ENCODE measurements at regions of chr10 and their contacts with region 1.

Region 1: GRCh38 chr10:128047351-128047750 is 78.9 kb downstream of the MKI67 start:
- DNase-seq: peak; percentile 78 to 92 (median 84)
- H3K4me3 ChIP-seq: peak overlapping the region; percentile 63 to 77
- H3K4me3 Mint-ChIP-seq: peak overlapping the region; percentile 86 to 99 (median 92)
- H3K27ac ChIP-seq: peak overlapping the region; percentile 83
- H3K27ac Mint-ChIP-seq: peak overlapping the region; percentile 90 to 99 (median 93)
- H3K4me1 ChIP-seq: peaks cover 48% of the 10 kb centered on the region
- H3K4me1 Mint-ChIP-seq: peaks cover 28 to 72% (median 49%) of the 10 kb centered on the region in 4 donors
- H3K27me3 ChIP-seq: no peaks in the 10 kb centered on the region
- H3K27me3 Mint-ChIP-seq: no peaks in the 10 kb centered on the region

Region 2: DNA sequence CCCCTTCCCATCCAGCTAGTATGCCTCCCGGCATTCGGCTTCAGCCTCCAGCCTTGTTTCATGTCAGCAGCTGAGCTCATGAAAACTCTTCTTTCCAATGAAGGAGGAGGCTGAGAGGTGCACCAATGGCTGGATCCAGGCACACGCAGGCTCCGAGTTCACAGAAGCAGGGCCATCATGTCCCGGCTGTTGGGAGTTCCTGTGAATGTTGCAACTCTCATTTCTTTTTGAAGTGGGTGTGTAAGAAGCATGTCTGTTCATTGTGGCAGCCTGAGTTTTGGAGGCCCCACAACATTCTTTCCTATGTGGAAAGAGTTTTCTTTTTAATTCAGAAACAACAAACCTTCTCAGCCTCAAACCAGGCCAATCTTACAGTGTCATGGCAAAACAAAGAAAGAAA is 50.8 kb before region 1 on chr10:
- CTCF ChIA-PET with region 1: no interaction called
- POLR2A ChIA-PET with region 1: no interaction called
- intact Hi-C with region 1: no loop called
- DNase-seq: no peak
- H3K4me3 ChIP-seq: no peak overlapping the region
- H3K4me3 Mint-ChIP-seq: no peak overlapping the region
- H3K27ac ChIP-seq: no peak overlapping the region
- H3K27ac Mint-ChIP-seq: no peak overlapping the region
- H3K4me1 ChIP-seq: peaks cover 3% of the 10 kb centered on the region
- H3K4me1 Mint-ChIP-seq: peaks cover under 1 to 5% (median 3%) of the 10 kb centered on the region in 4 donors
- H3K27me3 ChIP-seq: no peaks in the 10 kb centered on the region
- H3K27me3 Mint-ChIP-seq: peaks cover 4 to 12% of the 10 kb centered on the region in 2 donors

Region 3: GRCh38 chr10:128011175-128011979 is 36.0 kb before region 1 on chr10:
- CTCF ChIA-PET with region 1: interaction called, 11 read pairs
- POLR2A ChIA-PET with region 1: interaction called, 7 read pairs
- intact Hi-C with region 1: loop called (anchors 2 kb)
- DNase-seq: peak; percentile 77 to 89 (median 83)
- H3K4me3 ChIP-seq: no peak overlapping the region
- H3K4me3 Mint-ChIP-seq: peak overlapping the region in 5 of 8 donors; percentile 14 to 50 (median 20)
- H3K27ac ChIP-seq: no peak overlapping the region
- H3K27ac Mint-ChIP-seq: peak overlapping the region in 5 of 7 donors; percentile 10 to 83 (median 62)
- H3K4me1 ChIP-seq: peaks cover 3% of the 10 kb centered on the region
- H3K4me1 Mint-ChIP-seq: peaks cover 6 to 9% (median 7%) of the 10 kb centered on the region in 4 donors
- H3K27me3 ChIP-seq: no peaks in the 10 kb centered on the region
- H3K27me3 Mint-ChIP-seq: peaks cover 2 to 12% of the 10 kb centered on the region in 2 donors

Region 4: GRCh38 chr10:128058750-128059134 is 11.4 kb after region 1 on chr10:
- CTCF ChIA-PET with region 1: interaction called, 45 read pairs
- POLR2A ChIA-PET with region 1: interaction called, 169 read pairs
- intact Hi-C with region 1: loop called (anchors 1 kb)
- DNase-seq: no peak
- H3K4me3 ChIP-seq: no peak overlapping the region
- H3K4me3 Mint-ChIP-seq: no peak overlapping the region
- H3K27ac ChIP-seq: no peak overlapping the region
- H3K27ac Mint-ChIP-seq: peak overlapping the region in 1 of 7 donors; percentile 27
- H3K4me1 ChIP-seq: peaks cover 19% of the 10 kb centered on the region
- H3K4me1 Mint-ChIP-seq: peaks cover 27 to 63% (median 44%) of the 10 kb centered on the region in 4 donors
- H3K27me3 ChIP-seq: no peaks in the 10 kb centered on the region
- H3K27me3 Mint-ChIP-seq: no peaks in the 10 kb centered on the region

Region 5: GRCh38 chr10:128069351-128070051 is 22.1 kb after region 1 on chr10:
- CTCF ChIA-PET with region 1: interaction called, 93 read pairs
- POLR2A ChIA-PET with region 1: interaction called, 169 read pairs
- intact Hi-C with region 1: loop called (anchors 1 kb)
- DNase-seq: peak; percentile 74 to 80 (median 78)
- H3K4me3 ChIP-seq: no peak overlapping the region
- H3K4me3 Mint-ChIP-seq: peak overlapping the region in 2 of 8 donors; percentile 13 to 61
- H3K27ac ChIP-seq: no peak overlapping the region
- H3K27ac Mint-ChIP-seq: peak overlapping the region in 5 of 7 donors; percentile 55 to 82 (median 74)
- H3K4me1 ChIP-seq: peaks cover 29% of the 10 kb centered on the region
- H3K4me1 Mint-ChIP-seq: peaks cover 39 to 54% (median 47%) of the 10 kb centered on the region in 4 donors
- H3K27me3 ChIP-seq: no peaks in the 10 kb centered on the region
- H3K27me3 Mint-ChIP-seq: no peaks in the 10 kb centered on the region

Region 6: GRCh38 chr10:128161031-128161430 is 113.7 kb after region 1 on chr10:
- CTCF ChIA-PET with region 1: no interaction called
- POLR2A ChIA-PET with region 1: no interaction called
- intact Hi-C with region 1: no loop called
- DNase-seq: no peak
- H3K4me3 ChIP-seq: no peak overlapping the region
- H3K4me3 Mint-ChIP-seq: no peak overlapping the region
- H3K27ac ChIP-seq: no peak overlapping the region
- H3K27ac Mint-ChIP-seq: peak overlapping the region in 1 of 7 donors; percentile 34
- H3K4me1 ChIP-seq: no peaks in the 10 kb centered on the region
- H3K4me1 Mint-ChIP-seq: no peaks in the 10 kb centered on the region
- H3K27me3 ChIP-seq: peaks cover 3% of the 10 kb centered on the region
- H3K27me3 Mint-ChIP-seq: peaks cover 0 to 1% of the 10 kb centered on the region in 2 donors

Region 7: GRCh38 chr10:128178319-128178958 is 131.1 kb after region 1 on chr10:
- CTCF ChIA-PET with region 1: no interaction called
- POLR2A ChIA-PET with region 1: interaction called, 11 read pairs
- intact Hi-C with region 1: no loop called
- DNase-seq: peak in 4 of 5 donors; percentile 29 to 46 (median 40)
- H3K4me3 ChIP-seq: no peak overlapping the region
- H3K4me3 Mint-ChIP-seq: peak overlapping the region in 1 of 8 donors; percentile 26
- H3K27ac ChIP-seq: no peak overlapping the region
- H3K27ac Mint-ChIP-seq: peak overlapping the region in 1 of 7 donors; percentile 50
- H3K4me1 ChIP-seq: peaks cover 28% of the 10 kb centered on the region
- H3K4me1 Mint-ChIP-seq: peaks cover 21 to 41% (median 30%) of the 10 kb centered on the region in 4 donors
- H3K27me3 ChIP-seq: no peaks in the 10 kb centered on the region
- H3K27me3 Mint-ChIP-seq: peaks cover 0 to 1% of the 10 kb centered on the region in 2 donors

Region 8: DNA sequence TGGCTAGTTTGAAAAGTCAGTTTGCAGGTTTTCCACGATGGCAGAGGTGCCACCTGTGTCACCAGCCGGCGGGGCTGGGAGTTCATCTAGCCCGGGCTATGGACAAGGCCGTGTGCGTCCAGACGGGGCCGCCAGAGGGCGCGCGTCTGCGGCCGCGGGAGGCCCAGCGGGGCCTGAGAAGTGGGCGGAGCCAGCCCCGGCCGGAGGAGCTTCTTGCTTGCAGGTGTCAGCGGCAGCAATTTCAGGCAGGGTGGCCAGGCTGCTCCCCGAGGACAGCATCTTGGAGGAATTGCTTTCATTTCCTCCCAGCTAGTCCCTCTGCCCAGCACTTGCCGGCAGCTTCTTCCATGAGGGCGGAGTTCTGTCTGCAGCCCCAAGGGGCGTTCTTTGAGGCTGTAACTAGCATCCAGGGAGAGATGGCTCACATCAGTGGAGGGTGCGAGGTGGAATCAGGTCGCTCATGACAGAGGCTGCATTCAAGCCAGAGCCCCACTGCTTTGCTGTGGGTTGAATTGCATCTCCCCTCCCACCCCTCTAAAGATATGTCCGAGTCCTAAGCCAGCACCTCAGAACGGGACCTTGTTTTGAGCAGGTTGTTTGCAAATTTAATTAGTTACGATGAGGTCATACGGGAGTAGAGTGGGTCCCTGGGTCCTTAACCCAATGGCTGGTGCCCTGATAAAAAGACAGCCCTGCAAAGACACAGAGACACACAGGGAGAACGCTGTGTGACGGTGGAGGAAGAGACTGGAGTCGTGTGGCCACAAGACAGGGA is 164.8 kb after region 1 on chr10:
- CTCF ChIA-PET with region 1: interaction called, 13 read pairs
- POLR2A ChIA-PET with region 1: no interaction called
- intact Hi-C with region 1: no loop called
- DNase-seq: peak; percentile 78 to 85 (median 80)
- H3K4me3 ChIP-seq: peak overlapping the region in 1 of 2 donors; percentile 43
- H3K4me3 Mint-ChIP-seq: peak overlapping the region; percentile 85 to 96 (median 90)
- H3K27ac ChIP-seq: no peak overlapping the region
- H3K27ac Mint-ChIP-seq: peak overlapping the region; percentile 89 to 95 (median 93)
- H3K4me1 ChIP-seq: peaks cover 22% of the 10 kb centered on the region
- H3K4me1 Mint-ChIP-seq: peaks cover 9 to 24% (median 18%) of the 10 kb centered on the region in 4 donors
- H3K27me3 ChIP-seq: no peaks in the 10 kb centered on the region
- H3K27me3 Mint-ChIP-seq: no peaks in the 10 kb centered on the region